ENCODE measurements at regions of chr10 and their contacts with region 1.

Region 1: GRCh38 chr10:123704812-123705211 is 38.7 kb downstream of the GPR26 start:
- DNase-seq: no peak
- H3K4me3 ChIP-seq: no peak overlapping the region
- H3K27ac ChIP-seq: no peak overlapping the region
- H3K4me1 ChIP-seq: no peaks in the 10 kb centered on the region; a peak in 1 of 7 replicates
- H3K27me3 ChIP-seq: no peaks in the 10 kb centered on the region; a peak in 1 of 7 replicates
- CTCF ChIP-seq: no peak
- EP300 ChIP-seq: no peak
- POLR2A ChIP-seq: no peak
- RAD21 ChIP-seq: no peak

Region 2: GRCh38 chr10:123622381-123622780 is 82.4 kb before region 1 on chr10:
- CTCF ChIA-PET with region 1: no interaction called
- POLR2A ChIA-PET with region 1: no interaction called
- DNase-seq: no peak
- H3K4me3 ChIP-seq: no peak overlapping the region
- H3K27ac ChIP-seq: no peak overlapping the region
- H3K4me1 ChIP-seq: no peaks in the 10 kb centered on the region
- H3K27me3 ChIP-seq: no peaks in the 10 kb centered on the region
- CTCF ChIP-seq: no peak
- EP300 ChIP-seq: no peak
- POLR2A ChIP-seq: no peak
- RAD21 ChIP-seq: no peak

Region 3: GRCh38 chr10:123673198-123673597 is 31.6 kb before region 1 on chr10:
- CTCF ChIA-PET with region 1: interaction called, 12 read pairs
- POLR2A ChIA-PET with region 1: interaction called, 3 read pairs
- DNase-seq: no peak
- H3K4me3 ChIP-seq: no peak overlapping the region
- H3K27ac ChIP-seq: no peak overlapping the region
- H3K4me1 ChIP-seq: peaks cover 0 to 4% (median 0%) of the 10 kb centered on the region in 4 experiments; a peak in 2 of 7 replicates
- H3K27me3 ChIP-seq: peaks cover 0 to 7% (median 3%) of the 10 kb centered on the region in 4 experiments; a peak in 4 of 7 replicates
- CTCF ChIP-seq: no peak
- EP300 ChIP-seq: no peak
- POLR2A ChIP-seq: no peak
- RAD21 ChIP-seq: no peak

Region 4: GRCh38 chr10:123687764-123688163 is 17.0 kb before region 1 on chr10:
- CTCF ChIA-PET with region 1: interaction called, 30 read pairs
- POLR2A ChIA-PET with region 1: no interaction called
- DNase-seq: no peak
- H3K4me3 ChIP-seq: no peak overlapping the region
- H3K27ac ChIP-seq: no peak overlapping the region
- H3K4me1 ChIP-seq: no peaks in the 10 kb centered on the region
- H3K27me3 ChIP-seq: no peaks in the 10 kb centered on the region
- CTCF ChIP-seq: peak; percentile 39 to 42 (median 41)
- EP300 ChIP-seq: no peak
- POLR2A ChIP-seq: no peak
- RAD21 ChIP-seq: peak; percentile 33 to 58

Region 5: GRCh38 chr10:123909426-123909825 is 204.6 kb after region 1 on chr10:
- CTCF ChIA-PET with region 1: no interaction called
- POLR2A ChIA-PET with region 1: no interaction called
- DNase-seq: no peak
- H3K4me3 ChIP-seq: no peak overlapping the region
- H3K27ac ChIP-seq: no peak overlapping the region
- H3K4me1 ChIP-seq: peaks cover 5 to 30% (median 17%) of the 10 kb centered on the region in 4 experiments
- H3K27me3 ChIP-seq: peaks cover 0 to 2% (median 0%) of the 10 kb centered on the region in 4 experiments; a peak in 1 of 7 replicates
- CTCF ChIP-seq: no peak
- EP300 ChIP-seq: no peak
- POLR2A ChIP-seq: no peak
- RAD21 ChIP-seq: no peak

Region 6: GRCh38 chr10:123958241-123958640 is 253.4 kb after region 1 on chr10:
- CTCF ChIA-PET with region 1: no interaction called
- POLR2A ChIA-PET with region 1: no interaction called
- DNase-seq: no peak
- H3K4me3 ChIP-seq: no peak overlapping the region
- H3K27ac ChIP-seq: no peak overlapping the region
- H3K4me1 ChIP-seq: no peaks in the 10 kb centered on the region
- H3K27me3 ChIP-seq: no peaks in the 10 kb centered on the region
- CTCF ChIP-seq: no peak
- EP300 ChIP-seq: no peak
- POLR2A ChIP-seq: no peak
- RAD21 ChIP-seq: no peak

Measured in H1 (cell line).